ENCODE measurements at regions of chr12 and their contacts with region 1.

Region 1: GRCh38 chr12:126747530-126748149 is 1519.3 kb upstream of the TMEM132C start:
- DNase-seq: peak in 4 of 5 donors; percentile 15 to 73 (median 32)
- ATAC-seq: peak in 1 of 4 donors; percentile 42
- H3K4me3 ChIP-seq: no peak overlapping the region
- H3K27ac ChIP-seq: no peak overlapping the region
- H3K4me1 ChIP-seq: no peaks in the 10 kb centered on the region
- H3K27me3 ChIP-seq: peaks cover 0 to 10% (median 0%) of the 10 kb centered on the region in 9 donors
- CTCF ChIP-seq: peak; percentile 75 to 95 (median 87)
- POLR2A ChIP-seq: no peak

Region 2: GRCh38 chr12:125330645-125331341 is 1416.8 kb before region 1 on chr12:
- intact Hi-C with region 1: loop called in 1 of 10 experiments (anchors 5 kb)
- DNase-seq: peak; percentile 54 to 85 (median 61)
- ATAC-seq: peak; percentile 51 to 98 (median 90)
- H3K4me3 ChIP-seq: peak overlapping the region; percentile 11 to 59 (median 44)
- H3K27ac ChIP-seq: peak overlapping the region in 1 of 12 donors; percentile 32
- H3K4me1 ChIP-seq: peaks cover 0 to 11% (median 3%) of the 10 kb centered on the region in 12 donors
- H3K27me3 ChIP-seq: peaks cover 0 to 47% (median 17%) of the 10 kb centered on the region in 9 donors
- CTCF ChIP-seq: peak; percentile 70 to 95 (median 91)
- POLR2A ChIP-seq: no peak

Region 3: GRCh38 chr12:125533434-125534029 is 1214.1 kb before region 1 on chr12:
- intact Hi-C with region 1: loop called in 8 of 10 experiments (anchors 5 to 10 kb)
- DNase-seq: peak in 1 of 5 donors; percentile 25
- ATAC-seq: peak in 3 of 4 donors; percentile 56 to 69 (median 68)
- H3K4me3 ChIP-seq: no peak overlapping the region
- H3K27ac ChIP-seq: no peak overlapping the region
- H3K4me1 ChIP-seq: no peaks in the 10 kb centered on the region
- H3K27me3 ChIP-seq: peaks cover 0 to 37% (median 4%) of the 10 kb centered on the region in 9 donors
- CTCF ChIP-seq: peak; percentile 33 to 71 (median 64)
- POLR2A ChIP-seq: no peak

Region 4: GRCh38 chr12:125538401-125539199 is 1209.0 kb before region 1 on chr12:
- intact Hi-C with region 1: loop called in 8 of 10 experiments (anchors 5 to 10 kb)
- DNase-seq: no peak
- ATAC-seq: no peak
- H3K4me3 ChIP-seq: no peak overlapping the region
- H3K27ac ChIP-seq: no peak overlapping the region
- H3K4me1 ChIP-seq: no peaks in the 10 kb centered on the region
- H3K27me3 ChIP-seq: peaks cover 0 to 7% (median under 1%) of the 10 kb centered on the region in 9 donors
- CTCF ChIP-seq: no peak
- POLR2A ChIP-seq: no peak